CD4-positive, alpha-beta memory T cell (primary cell): ENCODE measurements at regions of chr19 and their contacts with region 1.

Region 1: DNA sequence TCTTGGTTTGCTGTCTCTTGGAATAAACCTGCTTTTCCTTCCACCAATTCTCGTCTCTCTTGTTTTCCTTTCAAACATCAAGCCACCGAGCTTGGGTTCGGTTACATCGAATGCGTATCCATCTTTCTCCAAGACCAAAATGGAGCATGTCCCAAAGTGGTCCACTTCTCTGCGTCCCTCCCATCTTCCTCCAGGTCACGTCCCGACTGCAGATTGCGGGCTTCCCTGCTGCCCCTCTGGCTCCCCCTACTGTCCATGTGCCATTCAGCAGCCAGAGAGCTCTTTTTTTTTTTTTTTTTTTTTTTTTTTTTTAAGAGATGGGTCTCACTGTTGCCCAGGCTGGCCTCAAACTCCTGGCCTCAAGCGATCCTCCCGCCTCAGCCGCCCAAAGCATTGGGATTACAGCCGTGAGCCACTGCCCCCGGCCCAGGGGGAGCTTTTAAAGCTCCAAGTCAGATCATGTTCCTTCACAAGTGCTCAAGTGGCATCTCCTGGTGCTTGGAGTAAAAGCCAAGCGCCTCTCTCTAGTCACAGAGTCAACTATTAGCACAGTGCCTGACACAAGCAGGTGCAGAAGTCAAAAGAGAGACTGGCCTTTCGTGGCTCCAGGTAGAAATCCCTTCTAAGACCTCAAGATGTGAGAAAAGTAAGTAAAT is 10.0 kb downstream of the COL5A3 start:
- DNase-seq: peak; percentile 54 to 64 (median 61)
- H3K4me3 ChIP-seq: no peak overlapping the region
- H3K4me3 Mint-ChIP-seq: peak overlapping the region in 1 of 8 donors; percentile 54
- H3K27ac ChIP-seq: no peak overlapping the region
- H3K27ac Mint-ChIP-seq: peak overlapping the region in 2 of 7 donors; percentile 31 to 38
- H3K4me1 ChIP-seq: peaks cover 25% of the 10 kb centered on the region
- H3K4me1 Mint-ChIP-seq: peaks cover 6 to 31% (median 19%) of the 10 kb centered on the region in 4 donors
- H3K27me3 ChIP-seq: no peaks in the 10 kb centered on the region
- H3K27me3 Mint-ChIP-seq: peaks cover 26 to 33% of the 10 kb centered on the region in 2 donors

Region 2: DNA sequence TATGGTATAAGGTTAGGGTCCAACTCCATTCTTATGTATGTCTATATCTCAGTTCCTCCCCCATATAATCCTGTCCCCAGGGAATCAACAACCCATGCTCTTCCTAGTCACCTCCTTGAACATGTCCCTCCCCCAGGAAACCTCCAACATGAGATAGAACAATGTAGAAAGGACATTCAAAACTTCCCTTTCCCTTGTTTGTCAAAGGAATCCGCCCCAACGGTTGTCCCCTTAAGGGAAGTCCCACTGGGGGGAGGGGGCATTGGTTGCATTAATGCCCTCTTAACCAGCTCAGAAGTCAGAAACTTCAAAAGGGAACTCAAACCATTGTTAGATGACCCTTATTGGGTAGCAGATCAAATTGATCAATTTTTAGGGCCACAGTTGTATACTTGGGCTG is 372.4 kb before region 1 on chr19:
- CTCF ChIA-PET with region 1: interaction called, 3 read pairs
- POLR2A ChIA-PET with region 1: no interaction called
- intact Hi-C with region 1: loop called (anchors 5 kb)
- DNase-seq: no peak
- H3K4me3 ChIP-seq: no peak overlapping the region
- H3K4me3 Mint-ChIP-seq: peak overlapping the region in 1 of 8 donors; percentile 14
- H3K27ac ChIP-seq: no peak overlapping the region
- H3K27ac Mint-ChIP-seq: no peak overlapping the region
- H3K4me1 ChIP-seq: no peaks in the 10 kb centered on the region
- H3K4me1 Mint-ChIP-seq: peaks cover 3 to 9% (median 5%) of the 10 kb centered on the region in 4 donors
- H3K27me3 ChIP-seq: no peaks in the 10 kb centered on the region
- H3K27me3 Mint-ChIP-seq: no peaks in the 10 kb centered on the region

Region 3: GRCh38 chr19:9834726-9835506 is 165.4 kb before region 1 on chr19 and contains the start of gene PIN1:
- CTCF ChIA-PET with region 1: no interaction called
- POLR2A ChIA-PET with region 1: no interaction called
- intact Hi-C with region 1: no loop called
- DNase-seq: peak; percentile 99 to 100 (median 99)
- H3K4me3 ChIP-seq: peak within 1 kb of the TSS; percentile 55 to 97
- H3K4me3 Mint-ChIP-seq: peak within 1 kb of the TSS; percentile 93 to 97 (median 96)
- H3K27ac ChIP-seq: peak within 1 kb of the TSS; percentile 74
- H3K27ac Mint-ChIP-seq: peak within 1 kb of the TSS; percentile 91 to 99 (median 97)
- H3K4me1 ChIP-seq: peaks cover 14% of the 10 kb centered on the region
- H3K4me1 Mint-ChIP-seq: peaks cover 10 to 34% (median 19%) of the 10 kb centered on the region in 4 donors
- H3K27me3 ChIP-seq: no peaks in the 10 kb centered on the region
- H3K27me3 Mint-ChIP-seq: no peaks in the 10 kb centered on the region
- total RNA-seq, gene PIN1: 72.1 to 76.9 TPM

Region 4: DNA sequence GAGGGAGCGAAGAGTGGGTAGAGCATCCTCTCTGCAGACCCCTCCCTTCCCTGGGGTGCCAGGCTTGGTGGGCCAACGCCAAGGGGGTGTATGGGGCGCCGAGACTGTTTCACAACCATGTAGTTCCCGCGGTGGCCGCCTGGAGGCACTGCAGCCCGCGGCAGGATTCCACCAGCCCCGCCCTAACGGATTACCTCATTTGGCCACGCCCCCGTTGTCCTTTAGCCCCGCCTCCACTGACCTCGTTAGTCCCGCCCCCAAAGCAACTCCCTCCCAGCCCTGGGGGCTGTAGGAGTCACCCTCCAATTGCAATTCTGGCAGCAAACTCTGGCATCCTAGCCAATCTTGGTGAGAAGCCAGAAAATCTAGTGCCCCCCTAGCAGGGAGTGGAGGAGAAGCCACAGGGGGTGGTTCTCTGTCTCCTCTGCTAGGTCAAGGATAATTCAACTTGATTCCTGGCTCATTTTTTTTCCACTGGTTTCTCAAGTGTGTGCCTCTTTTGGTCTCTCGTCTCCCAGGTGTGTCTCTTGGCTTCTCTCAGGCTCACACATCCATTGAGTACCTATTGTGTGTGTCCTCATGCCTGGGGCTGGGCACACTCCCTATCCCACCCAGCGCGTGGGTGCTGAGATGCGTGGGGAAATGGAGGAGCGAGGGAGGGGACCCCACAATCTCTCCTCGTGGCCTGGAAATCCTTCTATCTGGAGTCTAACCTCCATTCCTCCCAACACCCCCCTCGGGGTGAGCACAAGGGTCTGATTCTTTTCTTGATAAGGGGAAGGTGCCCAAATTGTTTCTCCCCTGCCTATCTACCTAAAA is 66.0 kb before region 1 on chr19:
- CTCF ChIA-PET with region 1: interaction called, 32 read pairs
- POLR2A ChIA-PET with region 1: no interaction called
- intact Hi-C with region 1: loop called (anchors 1 kb)
- DNase-seq: peak; percentile 73 to 80 (median 79)
- H3K4me3 ChIP-seq: no peak overlapping the region
- H3K4me3 Mint-ChIP-seq: peak overlapping the region in 6 of 8 donors; percentile 13 to 63 (median 42)
- H3K27ac ChIP-seq: no peak overlapping the region
- H3K27ac Mint-ChIP-seq: peak overlapping the region in 3 of 7 donors; percentile 19 to 52 (median 26)
- H3K4me1 ChIP-seq: peaks cover 30% of the 10 kb centered on the region
- H3K4me1 Mint-ChIP-seq: peaks cover 15 to 34% (median 26%) of the 10 kb centered on the region in 4 donors
- H3K27me3 ChIP-seq: peaks cover 24% of the 10 kb centered on the region
- H3K27me3 Mint-ChIP-seq: peaks cover 39 to 51% of the 10 kb centered on the region in 2 donors

Region 5: GRCh38 chr19:9986787-9987281 is 13.5 kb before region 1 on chr19:
- CTCF ChIA-PET with region 1: interaction called, 28 read pairs
- POLR2A ChIA-PET with region 1: no interaction called
- intact Hi-C with region 1: no loop called
- DNase-seq: no peak
- H3K4me3 ChIP-seq: no peak overlapping the region
- H3K4me3 Mint-ChIP-seq: no peak overlapping the region
- H3K27ac ChIP-seq: no peak overlapping the region
- H3K27ac Mint-ChIP-seq: no peak overlapping the region
- H3K4me1 ChIP-seq: no peaks in the 10 kb centered on the region
- H3K4me1 Mint-ChIP-seq: no peaks in the 10 kb centered on the region
- H3K27me3 ChIP-seq: no peaks in the 10 kb centered on the region
- H3K27me3 Mint-ChIP-seq: peaks cover 2 to 5% of the 10 kb centered on the region in 2 donors

Region 6: DNA sequence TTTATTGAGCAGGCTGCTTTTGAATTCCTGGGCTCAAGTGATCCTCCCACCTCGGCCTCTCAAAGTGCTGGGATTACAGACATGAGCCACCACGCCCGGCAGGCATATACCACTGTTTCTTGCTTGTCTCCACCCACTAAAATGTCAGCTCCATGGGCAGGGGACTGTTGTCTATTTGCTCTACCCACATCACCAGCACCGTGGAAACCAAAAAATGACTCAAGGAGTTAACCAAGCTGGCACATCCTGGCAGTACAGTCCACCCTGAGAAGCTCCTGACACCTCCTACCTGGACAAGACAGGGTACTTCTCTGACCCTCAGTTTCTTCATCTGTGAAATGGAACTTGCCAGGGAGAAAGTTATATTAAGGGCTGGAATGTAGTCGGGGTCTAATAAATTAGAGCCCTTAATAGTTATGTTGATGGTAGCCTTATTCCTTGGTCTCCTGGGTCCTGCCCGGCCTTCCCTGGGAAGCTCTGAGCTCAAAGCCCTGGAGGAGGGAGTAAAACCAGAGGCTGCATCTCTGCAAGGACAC is 26.9 kb after region 1 on chr19:
- CTCF ChIA-PET with region 1: interaction called, 16 read pairs
- POLR2A ChIA-PET with region 1: no interaction called
- intact Hi-C with region 1: no loop called
- DNase-seq: no peak
- H3K4me3 ChIP-seq: no peak overlapping the region
- H3K4me3 Mint-ChIP-seq: no peak overlapping the region
- H3K27ac ChIP-seq: no peak overlapping the region
- H3K27ac Mint-ChIP-seq: no peak overlapping the region
- H3K4me1 ChIP-seq: peaks cover 7% of the 10 kb centered on the region
- H3K4me1 Mint-ChIP-seq: peaks cover 0 to 4% (median 2%) of the 10 kb centered on the region in 4 donors
- H3K27me3 ChIP-seq: peaks cover 8% of the 10 kb centered on the region
- H3K27me3 Mint-ChIP-seq: peaks cover 15 to 18% of the 10 kb centered on the region in 2 donors